Endothelial cell of umbilical vein (primary cell): ENCODE measurements at regions of chr4 and their contacts with region 1.

Region 1: GRCh38 chr4:163544407-163545038 is 50.0 kb downstream of the TMA16 start:
- DNase-seq: peak; percentile 66
- H3K4me3 ChIP-seq: no peak overlapping the region
- H3K27ac ChIP-seq: no peak overlapping the region
- H3K4me1 ChIP-seq: no peaks in the 10 kb centered on the region
- H3K27me3 ChIP-seq: no peaks in the 10 kb centered on the region
- CTCF ChIP-seq: peak; percentile 93 to 95
- POLR2A ChIP-seq: no peak

Region 2: DNA sequence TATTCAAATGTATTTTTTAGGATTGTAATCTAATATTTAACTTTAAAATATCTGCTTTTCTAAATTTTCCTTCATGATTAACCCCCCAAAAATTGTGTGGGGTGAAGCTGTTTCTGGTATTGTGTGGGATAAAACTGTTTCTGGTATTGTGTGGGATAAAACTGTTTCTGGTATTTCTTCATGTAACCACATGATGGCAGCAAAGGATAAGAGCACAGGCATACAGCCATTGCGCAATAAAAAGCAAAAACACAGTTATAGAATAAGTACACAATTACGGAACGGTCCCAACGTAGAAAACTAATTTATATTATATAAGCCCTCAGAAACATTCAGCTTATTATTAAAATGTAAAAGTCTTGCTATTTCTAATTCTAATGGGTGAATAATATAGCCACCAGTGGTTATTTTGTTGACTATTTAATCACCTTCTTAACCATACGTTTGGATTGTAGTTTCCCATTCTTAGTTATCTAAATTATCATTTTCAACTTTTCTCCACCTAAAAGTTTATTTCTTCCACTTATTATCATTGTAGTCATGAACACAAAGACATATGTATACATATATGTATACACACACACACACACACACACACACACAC is 1046.9 kb before region 1 on chr4:
- CTCF ChIA-PET with region 1: interaction called, 13 read pairs
- POLR2A ChIA-PET with region 1: no interaction called
- dilution Hi-C with region 1: no loop called
- intact Hi-C with region 1: loop called (anchors 1 kb)
- DNase-seq: peak; percentile 24
- H3K4me3 ChIP-seq: no peak overlapping the region
- H3K27ac ChIP-seq: no peak overlapping the region
- H3K4me1 ChIP-seq: no peaks in the 10 kb centered on the region
- H3K27me3 ChIP-seq: no peaks in the 10 kb centered on the region
- CTCF ChIP-seq: peak; percentile 30 to 44
- POLR2A ChIP-seq: no peak

Region 3: GRCh38 chr4:163137581-163137980 is 406.9 kb before region 1 on chr4:
- CTCF ChIA-PET with region 1: no interaction called
- POLR2A ChIA-PET with region 1: no interaction called
- dilution Hi-C with region 1: no loop called
- intact Hi-C with region 1: no loop called
- DNase-seq: peak; percentile 52
- H3K4me3 ChIP-seq: no peak overlapping the region
- H3K27ac ChIP-seq: no peak overlapping the region
- H3K4me1 ChIP-seq: peaks cover 3% of the 10 kb centered on the region
- H3K27me3 ChIP-seq: no peaks in the 10 kb centered on the region
- CTCF ChIP-seq: no peak
- POLR2A ChIP-seq: no peak

Region 4: GRCh38 chr4:163166041-163166579 is 378.4 kb before region 1 on chr4:
- CTCF ChIA-PET with region 1: no interaction called
- POLR2A ChIA-PET with region 1: no interaction called
- dilution Hi-C with region 1: no loop called
- intact Hi-C with region 1: loop called (anchors 5 kb)
- DNase-seq: peak; percentile 73
- H3K4me3 ChIP-seq: peak overlapping the region; percentile 97
- H3K27ac ChIP-seq: peak overlapping the region; percentile 83
- H3K4me1 ChIP-seq: peaks cover 28% of the 10 kb centered on the region
- H3K27me3 ChIP-seq: no peaks in the 10 kb centered on the region
- CTCF ChIP-seq: no peak
- POLR2A ChIP-seq: no peak

Region 5: DNA sequence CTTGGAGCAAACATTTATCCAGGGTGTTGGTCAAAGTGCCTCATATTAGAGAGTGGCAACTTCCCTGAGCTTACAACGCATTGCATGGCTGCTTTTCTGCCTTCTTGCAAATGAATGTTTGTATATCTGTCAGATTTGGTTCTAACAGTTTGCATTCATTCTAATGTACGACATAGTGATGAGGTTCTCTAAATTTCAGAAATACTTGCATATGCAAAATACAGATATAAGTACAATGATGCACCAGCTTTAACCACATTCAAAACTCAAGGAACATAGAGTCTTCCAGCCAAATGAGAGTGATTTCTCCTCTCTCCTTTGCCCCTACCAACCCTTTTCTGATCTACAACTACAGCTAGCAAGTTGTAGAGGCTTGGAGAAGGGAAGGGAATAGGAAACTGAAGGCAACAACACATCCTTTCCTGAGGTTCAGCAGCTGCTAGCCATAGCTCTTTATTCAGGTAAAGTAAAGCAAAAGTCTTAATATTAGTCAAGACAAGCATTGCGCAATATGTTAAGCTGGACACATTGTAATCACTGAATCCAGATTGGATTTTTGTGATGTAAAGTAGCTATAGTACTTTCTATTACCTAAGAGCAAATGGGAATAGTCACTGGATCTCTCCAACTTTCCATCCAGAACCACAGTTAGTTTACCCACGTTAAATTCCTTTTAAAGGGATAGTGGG is 77.3 kb before region 1 on chr4:
- CTCF ChIA-PET with region 1: no interaction called
- POLR2A ChIA-PET with region 1: no interaction called
- dilution Hi-C with region 1: no loop called
- intact Hi-C with region 1: no loop called
- DNase-seq: no peak
- H3K4me3 ChIP-seq: no peak overlapping the region
- H3K27ac ChIP-seq: no peak overlapping the region
- H3K4me1 ChIP-seq: no peaks in the 10 kb centered on the region
- H3K27me3 ChIP-seq: peaks cover 0 to 3% of the 10 kb centered on the region in 2 experiments
- CTCF ChIP-seq: no peak
- POLR2A ChIP-seq: no peak

Region 6: GRCh38 chr4:163484906-163485305 is 59.6 kb before region 1 on chr4:
- CTCF ChIA-PET with region 1: interaction called, 106 read pairs
- POLR2A ChIA-PET with region 1: no interaction called
- dilution Hi-C with region 1: no loop called
- intact Hi-C with region 1: loop called (anchors 1 kb)
- DNase-seq: peak; percentile 56
- H3K4me3 ChIP-seq: no peak overlapping the region
- H3K27ac ChIP-seq: no peak overlapping the region
- H3K4me1 ChIP-seq: no peaks in the 10 kb centered on the region
- H3K27me3 ChIP-seq: peaks cover 9 to 13% of the 10 kb centered on the region in 2 experiments
- CTCF ChIP-seq: peak; percentile 43 to 49
- POLR2A ChIP-seq: no peak

Region 7: DNA sequence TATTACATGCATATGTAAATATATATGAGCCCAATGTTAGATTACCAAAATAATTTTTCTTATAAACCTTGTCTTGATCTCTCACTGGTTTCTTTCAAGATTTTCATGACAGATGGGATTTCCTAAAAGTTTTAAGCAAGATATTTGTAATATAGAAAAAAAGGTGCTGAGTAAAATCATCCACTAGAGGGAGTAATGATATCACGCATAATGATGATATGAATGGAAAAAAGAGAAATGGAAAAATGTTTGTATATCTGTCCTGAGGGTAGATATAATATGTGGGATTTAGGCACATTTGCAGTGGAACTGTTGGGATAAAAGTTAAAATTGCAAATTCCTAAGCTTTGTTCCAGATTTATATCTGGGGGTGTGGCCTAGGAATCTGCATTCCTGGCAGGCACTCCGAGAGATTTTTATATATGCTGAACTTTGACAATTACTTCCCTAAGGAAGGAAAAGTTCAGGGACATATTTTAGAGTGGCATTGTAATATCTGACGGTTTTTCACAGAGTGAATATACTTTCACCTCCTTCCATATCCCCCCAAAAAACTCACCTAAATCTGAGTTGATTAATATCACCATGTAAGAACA is 10.4 kb after region 1 on chr4:
- CTCF ChIA-PET with region 1: interaction called, 19 read pairs
- POLR2A ChIA-PET with region 1: no interaction called
- dilution Hi-C with region 1: no loop called
- intact Hi-C with region 1: no loop called
- DNase-seq: peak; percentile 28
- H3K4me3 ChIP-seq: no peak overlapping the region
- H3K27ac ChIP-seq: no peak overlapping the region
- H3K4me1 ChIP-seq: no peaks in the 10 kb centered on the region
- H3K27me3 ChIP-seq: peaks cover 0 to 3% of the 10 kb centered on the region in 2 experiments
- CTCF ChIP-seq: peak; percentile 39 to 40
- POLR2A ChIP-seq: no peak